Ovary (tissue), 10 donors: ENCODE measurements at regions of chr6 and their contacts with region 1.

Region 1: GRCh38 chr6:27503436-27504030 is 30.6 kb upstream of the ZNF184 start:
- DNase-seq: peak; percentile 65 to 86 (median 82)
- H3K4me3 ChIP-seq: peak overlapping the region; percentile 48
- H3K27ac ChIP-seq: peak overlapping the region; percentile 26 to 66
- H3K4me1 ChIP-seq: no peaks in the 10 kb centered on the region
- H3K27me3 ChIP-seq: no peaks in the 10 kb centered on the region
- CTCF ChIP-seq: no peak
- EP300 ChIP-seq: no peak
- POLR2A ChIP-seq: no peak

Region 2: GRCh38 chr6:27177485-27178406 is 325.8 kb before region 1 on chr6:
- intact Hi-C with region 1: loop called in 1 of 4 experiments (anchors 10 kb)
- DNase-seq: peak; percentile 58 to 79 (median 70)
- H3K4me3 ChIP-seq: peak overlapping the region; percentile 56
- H3K27ac ChIP-seq: peak overlapping the region; percentile 76 to 79
- H3K4me1 ChIP-seq: peaks cover 2% of the 10 kb centered on the region
- H3K27me3 ChIP-seq: no peaks in the 10 kb centered on the region
- CTCF ChIP-seq: peak in 2 of 3 donors; percentile 14 to 22
- EP300 ChIP-seq: no peak
- POLR2A ChIP-seq: no peak